Activated CD8-positive, alpha-beta T cell treated with anti-CD3 and anti-CD28 coated beads, Interleukin-2, amount 10 ng/mL, durations not matched to agents 7 days and 5 days (primary cell): ENCODE measurements at regions of chr9 and their contacts with region 1.

Region 1: DNA sequence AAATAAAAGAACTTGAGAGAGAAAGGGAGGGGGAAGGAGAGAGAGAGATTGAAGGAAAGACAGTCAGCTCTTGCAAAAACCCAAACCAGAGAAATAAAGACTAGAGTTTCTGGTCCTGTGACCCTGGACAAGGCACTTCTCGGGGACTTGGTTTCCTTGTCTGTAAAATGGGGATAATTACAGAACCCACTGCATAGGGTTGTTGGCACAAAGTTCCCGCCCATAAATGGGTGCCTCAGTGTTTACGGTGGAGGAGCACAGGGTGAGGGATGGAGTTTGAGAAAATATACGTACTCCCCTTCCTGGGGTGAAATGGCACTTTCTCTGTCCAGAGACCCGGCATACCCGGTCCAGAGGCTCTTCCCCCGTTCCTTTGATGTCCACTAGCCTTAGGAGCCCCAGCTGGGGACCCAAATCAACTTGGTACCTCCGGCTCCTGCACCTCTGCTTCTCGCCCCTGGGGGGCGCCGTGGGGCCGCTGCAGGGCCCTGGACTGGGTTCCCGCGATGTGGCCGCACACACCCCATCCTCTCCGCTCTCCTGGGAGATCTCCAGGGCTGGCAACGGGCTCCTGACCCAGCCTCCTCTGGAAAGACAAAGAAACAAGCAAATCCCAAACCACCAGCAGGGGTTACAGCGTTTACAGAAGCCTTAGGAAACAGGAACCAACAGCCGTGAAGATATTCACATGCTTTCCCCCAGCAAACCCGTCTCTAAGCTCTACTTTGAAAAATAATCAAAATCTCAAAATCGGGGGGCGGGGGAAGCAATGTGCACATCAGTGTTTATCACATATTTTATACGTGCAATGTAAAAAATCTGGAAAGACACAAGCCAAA is 26.3 kb downstream of the PTGES start:
- DNase-seq: peak; percentile 69
- ATAC-seq: peak; percentile 94
- H3K4me3 Mint-ChIP-seq: no peak overlapping the region
- H3K27ac Mint-ChIP-seq: no peak overlapping the region
- H3K4me1 Mint-ChIP-seq: peaks cover 3% of the 10 kb centered on the region
- H3K27me3 Mint-ChIP-seq: peaks cover 17% of the 10 kb centered on the region

Region 2: GRCh38 chr9:129641746-129642513 is 84.6 kb before region 1 on chr9 and contains the start of gene ASB6:
- CTCF ChIA-PET with region 1: interaction called, 12 read pairs
- POLR2A ChIA-PET with region 1: no interaction called
- DNase-seq: peak; percentile 94
- ATAC-seq: peak; percentile 93
- H3K4me3 Mint-ChIP-seq: peak within 1 kb of the TSS; percentile 83
- H3K27ac Mint-ChIP-seq: peak within 1 kb of the TSS; percentile 88
- H3K4me1 Mint-ChIP-seq: peaks cover 19% of the 10 kb centered on the region
- H3K27me3 Mint-ChIP-seq: no peaks in the 10 kb centered on the region
- total RNA-seq, gene ASB6: 25.4 to 27.7 TPM

Region 3: GRCh38 chr9:129653823-129654553 is 72.6 kb before region 1 on chr9:
- CTCF ChIA-PET with region 1: no interaction called
- POLR2A ChIA-PET with region 1: no interaction called
- DNase-seq: no peak
- ATAC-seq: no peak
- H3K4me3 Mint-ChIP-seq: no peak overlapping the region
- H3K27ac Mint-ChIP-seq: no peak overlapping the region
- H3K4me1 Mint-ChIP-seq: no peaks in the 10 kb centered on the region
- H3K27me3 Mint-ChIP-seq: peaks cover 6% of the 10 kb centered on the region

Region 4: DNA sequence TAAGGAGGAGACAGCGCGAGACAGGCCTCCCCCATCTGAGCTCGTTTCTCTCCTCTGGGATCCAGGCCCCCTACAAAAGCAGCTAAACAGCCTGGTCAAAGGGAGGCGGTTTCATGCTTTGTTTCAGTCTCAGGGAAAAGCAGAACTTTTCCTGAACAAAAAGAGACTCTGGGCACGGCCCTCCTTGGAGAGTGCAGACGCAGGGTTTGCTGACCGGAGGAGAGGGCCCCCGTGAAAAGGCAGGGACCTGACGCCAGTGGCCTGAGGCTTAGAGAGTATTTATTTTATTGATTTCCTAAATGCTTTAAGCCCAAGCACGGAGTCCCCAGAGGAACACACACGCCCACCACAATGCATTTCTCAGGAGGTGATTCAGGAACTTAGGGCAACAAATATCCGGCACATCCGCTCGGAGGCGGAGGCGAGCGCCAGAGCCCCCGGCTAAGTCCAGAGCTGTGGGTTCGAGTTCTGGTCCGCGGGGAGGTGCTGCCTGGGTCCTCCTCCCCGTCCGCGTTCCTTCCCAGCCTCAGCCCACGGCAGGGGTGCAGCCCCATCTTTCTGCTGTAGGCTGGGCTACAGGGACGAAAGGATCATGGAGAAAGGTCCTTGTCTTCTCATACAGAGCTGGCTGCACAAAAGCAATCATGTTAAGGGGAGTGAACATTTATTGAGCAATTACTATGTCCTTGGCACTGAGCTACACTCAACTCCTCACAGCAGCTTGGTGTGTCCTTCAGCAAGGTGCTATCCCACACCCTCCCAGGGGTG is 13.7 kb before region 1 on chr9:
- CTCF ChIA-PET with region 1: interaction called, 17 read pairs
- POLR2A ChIA-PET with region 1: no interaction called
- DNase-seq: no peak
- ATAC-seq: no peak
- H3K4me3 Mint-ChIP-seq: peak overlapping the region; percentile 74
- H3K27ac Mint-ChIP-seq: peak overlapping the region; percentile 83
- H3K4me1 Mint-ChIP-seq: peaks cover 32% of the 10 kb centered on the region
- H3K27me3 Mint-ChIP-seq: peaks cover 11% of the 10 kb centered on the region

Region 5: DNA sequence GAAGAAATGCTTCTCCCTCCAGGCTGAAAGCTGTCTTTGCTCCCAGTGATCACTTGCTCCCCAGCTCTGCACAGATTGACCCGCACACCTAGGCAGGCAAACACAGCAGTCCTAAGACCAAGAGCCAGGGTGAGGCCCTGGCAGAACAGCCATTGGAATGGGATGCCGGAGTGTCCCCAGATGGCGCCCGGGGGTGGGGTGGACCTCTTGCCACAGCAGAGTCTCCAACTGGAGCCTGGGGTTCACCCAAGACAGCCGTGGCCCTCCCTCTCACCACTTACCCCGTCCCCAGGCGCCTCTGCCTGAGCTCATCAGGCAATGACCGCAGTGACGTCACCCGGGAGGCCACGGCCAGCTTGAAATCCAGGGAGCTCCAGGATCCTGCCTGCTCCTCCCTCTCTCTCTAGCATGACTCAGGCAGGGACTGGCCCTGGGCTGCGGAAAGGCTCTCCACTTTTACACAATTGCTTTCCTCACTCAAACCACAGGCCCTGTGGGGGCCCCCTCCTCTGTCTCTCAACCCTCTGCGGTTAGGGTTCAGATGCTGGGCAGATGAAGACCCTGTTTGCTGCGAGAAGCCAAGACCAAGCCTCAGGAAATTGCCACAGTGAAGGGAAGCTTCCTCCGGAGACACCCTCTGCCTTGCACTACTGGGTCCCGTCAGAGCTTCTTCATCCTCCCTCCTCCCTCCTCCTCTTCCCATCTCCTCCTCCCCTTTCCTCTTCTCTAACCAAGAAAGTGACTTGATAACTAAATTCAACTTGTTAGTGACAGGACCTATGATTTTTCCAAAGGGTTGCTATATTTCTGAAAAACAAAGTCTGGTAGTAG is 50.6 kb after region 1 on chr9:
- CTCF ChIA-PET with region 1: interaction called, 45 read pairs
- POLR2A ChIA-PET with region 1: interaction called, 4 read pairs
- DNase-seq: peak; percentile 68
- ATAC-seq: peak; percentile 72
- H3K4me3 Mint-ChIP-seq: peak overlapping the region; percentile 15
- H3K27ac Mint-ChIP-seq: no peak overlapping the region
- H3K4me1 Mint-ChIP-seq: peaks cover 17% of the 10 kb centered on the region
- H3K27me3 Mint-ChIP-seq: peaks cover 14% of the 10 kb centered on the region

Region 6: GRCh38 chr9:129783516-129784361 is 57.2 kb after region 1 on chr9:
- CTCF ChIA-PET with region 1: interaction called, 45 read pairs
- POLR2A ChIA-PET with region 1: no interaction called
- DNase-seq: peak; percentile 83
- ATAC-seq: peak; percentile 94
- H3K4me3 Mint-ChIP-seq: no peak overlapping the region
- H3K27ac Mint-ChIP-seq: no peak overlapping the region
- H3K4me1 Mint-ChIP-seq: peaks cover 4% of the 10 kb centered on the region
- H3K27me3 Mint-ChIP-seq: peaks cover 19% of the 10 kb centered on the region

Region 7: DNA sequence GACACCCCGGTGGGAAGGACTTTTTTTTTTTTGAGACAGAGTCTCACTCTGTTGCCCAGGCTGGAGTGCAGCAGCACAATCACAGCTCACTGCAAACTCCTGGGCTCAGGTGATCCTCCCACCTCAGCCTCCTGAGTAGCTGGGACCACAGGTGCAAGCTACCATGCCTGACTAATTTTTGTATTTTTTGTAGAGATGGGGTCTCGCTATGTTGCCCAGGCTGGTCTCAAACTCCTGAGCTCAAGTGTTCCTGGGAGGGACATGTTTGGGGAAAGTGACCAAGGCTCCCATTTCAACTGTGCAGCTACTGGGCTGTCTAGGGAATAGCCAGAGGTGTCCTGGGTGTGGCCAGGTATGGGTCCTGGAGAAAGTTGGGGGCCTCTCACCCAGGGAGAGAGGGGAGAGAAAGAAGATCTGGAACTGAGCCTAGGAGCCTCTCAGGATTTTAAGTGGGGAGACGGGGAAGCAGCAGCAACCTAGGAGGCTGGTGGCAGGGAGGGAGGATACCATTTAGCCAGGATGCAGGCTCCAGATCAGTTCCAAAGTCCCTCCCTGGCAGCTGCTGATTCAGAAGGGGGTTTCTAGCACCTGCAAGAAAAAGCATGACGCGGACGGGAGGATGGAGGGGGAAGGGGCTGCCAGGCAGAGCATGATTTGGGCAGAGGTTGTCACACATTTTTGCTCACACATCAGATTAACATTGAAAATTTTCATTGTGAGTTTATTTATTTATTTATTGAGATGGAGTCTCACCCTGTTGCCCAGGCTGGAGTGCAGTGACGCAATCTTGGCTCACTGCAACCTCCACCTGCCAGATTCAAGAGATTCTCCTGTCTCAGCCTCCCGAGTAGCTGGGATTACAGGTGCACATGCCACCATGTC is 69.7 kb after region 1 on chr9:
- CTCF ChIA-PET with region 1: interaction called, 37 read pairs
- POLR2A ChIA-PET with region 1: no interaction called
- DNase-seq: no peak
- ATAC-seq: no peak
- H3K4me3 Mint-ChIP-seq: no peak overlapping the region
- H3K27ac Mint-ChIP-seq: no peak overlapping the region
- H3K4me1 Mint-ChIP-seq: peaks cover 3% of the 10 kb centered on the region
- H3K27me3 Mint-ChIP-seq: peaks cover 5% of the 10 kb centered on the region